ENCODE measurements at regions of chr10 and their contacts with region 1.

Region 1: DNA sequence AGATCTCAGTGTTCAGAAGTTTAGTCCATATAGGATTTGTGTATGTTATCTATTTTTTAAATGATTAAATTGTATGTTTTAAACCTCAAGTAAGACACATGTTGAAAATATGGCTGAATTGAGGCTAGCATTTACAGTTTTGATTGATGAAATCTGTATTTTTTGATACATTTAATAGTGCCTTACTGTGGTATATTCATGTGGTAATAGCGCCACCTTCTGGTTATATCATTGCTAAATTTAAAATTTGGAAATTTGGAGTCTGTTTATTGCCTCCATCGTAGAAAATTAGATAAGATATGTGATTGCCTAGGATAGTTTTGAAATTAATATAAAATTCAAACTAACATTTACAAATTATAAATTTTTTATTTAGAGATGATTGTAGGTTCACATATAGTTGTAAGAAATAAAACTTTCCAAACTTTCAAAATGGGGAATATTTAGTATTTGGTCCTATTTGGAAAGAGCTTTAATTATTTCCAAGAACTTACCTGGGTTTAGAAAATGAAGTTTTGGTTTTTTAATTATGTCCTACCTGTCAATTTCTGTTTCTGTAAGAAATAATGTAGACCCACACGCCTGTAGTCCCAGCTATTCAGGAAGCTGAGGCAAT is 19.1 kb upstream of the ARMS2 start:
- DNase-seq: peak in 1 of 35 experiments; percentile 77
- ATAC-seq: peak in 2 of 4 experiments; percentile 43 to 46
- H3K4me3 ChIP-seq: no peak overlapping the region
- H3K4me3 Mint-ChIP-seq: no peak overlapping the region
- H3K27ac ChIP-seq: no peak overlapping the region
- H3K27ac Mint-ChIP-seq: peak overlapping the region in 1 of 2 donors; percentile 37
- H3K4me1 ChIP-seq: no peaks in the 10 kb centered on the region
- H3K4me1 Mint-ChIP-seq: peaks cover 0 to 8% (median 0%) of the 10 kb centered on the region in 3 donors
- H3K27me3 ChIP-seq: no peaks in the 10 kb centered on the region
- H3K27me3 Mint-ChIP-seq: no peaks in the 10 kb centered on the region

Region 2: GRCh38 chr10:122298598-122299301 is 136.6 kb before region 1 on chr10:
- CTCF ChIA-PET with region 1: interaction called, 37 to 55 read pairs
- POLR2A ChIA-PET with region 1: no interaction called
- DNase-seq: peak; percentile 32 to 83 (median 58)
- ATAC-seq: peak; percentile 81 to 84 (median 83)
- H3K4me3 ChIP-seq: no peak overlapping the region
- H3K4me3 Mint-ChIP-seq: peak overlapping the region in 1 of 3 donors; percentile 31
- H3K27ac ChIP-seq: no peak overlapping the region
- H3K27ac Mint-ChIP-seq: no peak overlapping the region
- H3K4me1 ChIP-seq: peaks cover 0 to 27% of the 10 kb centered on the region in 2 experiments
- H3K4me1 Mint-ChIP-seq: peaks cover 12 to 17% (median 14%) of the 10 kb centered on the region in 3 donors
- H3K27me3 ChIP-seq: peaks cover 0 to 19% of the 10 kb centered on the region in 2 experiments
- H3K27me3 Mint-ChIP-seq: peaks cover 0 to 4% of the 10 kb centered on the region in 2 donors

Region 3: GRCh38 chr10:122342293-122343134 is 92.8 kb before region 1 on chr10:
- CTCF ChIA-PET with region 1: interaction called, 41 read pairs
- POLR2A ChIA-PET with region 1: no interaction called
- DNase-seq: peak; percentile 19 to 79 (median 54)
- ATAC-seq: peak; percentile 66 to 84 (median 72)
- H3K4me3 ChIP-seq: no peak overlapping the region
- H3K4me3 Mint-ChIP-seq: no peak overlapping the region
- H3K27ac ChIP-seq: no peak overlapping the region
- H3K27ac Mint-ChIP-seq: peak overlapping the region in 1 of 2 donors; percentile 57
- H3K4me1 ChIP-seq: peaks cover 0 to 2% of the 10 kb centered on the region in 2 experiments
- H3K4me1 Mint-ChIP-seq: peaks cover 6 to 9% (median 8%) of the 10 kb centered on the region in 3 donors
- H3K27me3 ChIP-seq: peaks cover 0 to 4% of the 10 kb centered on the region in 2 experiments
- H3K27me3 Mint-ChIP-seq: no peaks in the 10 kb centered on the region

Region 4: DNA sequence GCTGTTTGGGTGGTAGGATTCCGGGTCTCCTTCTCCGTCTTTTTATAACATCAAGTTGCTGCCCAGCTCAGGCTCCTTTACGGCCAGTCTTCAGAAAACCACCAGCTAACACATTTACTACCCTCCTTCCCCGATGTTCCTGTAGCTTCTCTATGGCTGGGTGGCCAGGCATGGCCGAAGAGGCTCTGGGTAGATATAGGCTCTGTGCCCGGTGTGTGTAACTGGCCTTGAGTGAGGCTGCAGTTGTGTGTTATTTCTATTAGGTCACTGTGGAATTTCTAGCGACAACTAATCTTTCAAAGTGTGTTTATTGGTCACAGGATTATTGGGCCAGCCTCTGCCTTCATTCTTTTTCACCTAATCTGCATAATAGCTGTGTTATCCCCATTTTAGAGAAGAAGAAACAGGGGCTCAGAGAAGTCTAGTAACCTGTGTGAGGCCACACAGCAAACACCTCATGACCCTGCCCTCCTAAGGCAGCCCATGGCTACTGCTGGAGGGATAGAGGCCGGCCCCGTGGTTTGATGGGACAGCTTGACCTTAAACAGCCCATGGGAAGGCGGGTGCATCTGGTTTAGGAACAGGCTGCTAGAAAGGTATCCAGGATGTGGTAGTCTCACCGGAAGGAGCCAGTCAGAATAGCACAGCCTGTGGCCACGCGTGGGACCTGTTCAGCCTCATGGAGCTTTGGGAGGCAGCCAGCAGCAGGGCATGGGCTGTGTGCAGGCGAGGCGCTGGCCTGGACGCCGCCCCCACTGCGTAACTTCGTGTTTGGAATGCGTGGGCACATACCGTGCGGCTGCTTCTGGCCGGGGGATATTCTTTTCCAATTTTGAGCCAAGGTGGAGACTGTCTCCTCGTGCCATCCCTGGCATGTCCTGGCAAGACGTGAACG is 55.7 kb after region 1 on chr10:
- CTCF ChIA-PET with region 1: no interaction called
- POLR2A ChIA-PET with region 1: no interaction called
- DNase-seq: peak in 9 of 35 experiments; percentile 6 to 46 (median 11)
- ATAC-seq: peak; percentile 65 to 83 (median 76)
- H3K4me3 ChIP-seq: no peak overlapping the region
- H3K4me3 Mint-ChIP-seq: no peak overlapping the region
- H3K27ac ChIP-seq: no peak overlapping the region
- H3K27ac Mint-ChIP-seq: no peak overlapping the region
- H3K4me1 ChIP-seq: peaks cover 0 to 21% of the 10 kb centered on the region in 2 experiments
- H3K4me1 Mint-ChIP-seq: peaks cover 11 to 32% (median 17%) of the 10 kb centered on the region in 3 donors
- H3K27me3 ChIP-seq: peaks cover 0 to 20% of the 10 kb centered on the region in 2 experiments
- H3K27me3 Mint-ChIP-seq: peaks cover 3 to 8% of the 10 kb centered on the region in 2 donors

Region 5: DNA sequence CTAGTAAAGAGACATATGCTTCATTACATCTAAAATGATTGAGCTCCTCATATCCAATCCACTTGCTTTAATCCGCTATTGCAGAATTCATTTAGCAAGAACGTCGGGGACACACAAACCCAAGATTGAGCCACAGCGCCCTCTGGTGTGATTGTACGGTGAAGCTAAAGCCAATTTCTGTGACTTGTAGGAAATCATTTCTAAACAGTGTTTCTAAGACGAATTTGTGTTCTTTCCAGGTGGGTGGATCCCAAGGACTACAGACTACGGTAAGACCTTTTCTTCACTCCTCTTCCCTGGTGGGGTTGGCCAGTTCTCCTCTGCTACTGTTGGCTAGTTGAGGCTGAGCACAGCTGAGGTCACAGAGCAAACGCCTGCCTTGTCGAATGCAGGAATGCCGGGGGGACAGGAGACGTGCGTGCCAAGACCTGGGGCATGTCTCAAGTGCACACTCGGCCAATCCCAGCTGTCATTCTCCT is 130.4 kb after region 1 on chr10:
- CTCF ChIA-PET with region 1: interaction called, 6 to 13 read pairs
- POLR2A ChIA-PET with region 1: no interaction called
- DNase-seq: peak; percentile 18 to 85 (median 67)
- ATAC-seq: peak in 1 of 4 experiments; percentile 44
- H3K4me3 ChIP-seq: no peak overlapping the region
- H3K4me3 Mint-ChIP-seq: no peak overlapping the region
- H3K27ac ChIP-seq: no peak overlapping the region
- H3K27ac Mint-ChIP-seq: no peak overlapping the region
- H3K4me1 ChIP-seq: peaks cover 0 to 6% of the 10 kb centered on the region in 2 experiments
- H3K4me1 Mint-ChIP-seq: peaks cover 12 to 18% (median 15%) of the 10 kb centered on the region in 3 donors
- H3K27me3 ChIP-seq: peaks cover 0 to 23% of the 10 kb centered on the region in 2 experiments
- H3K27me3 Mint-ChIP-seq: peaks cover 27 to 37% of the 10 kb centered on the region in 2 donors

Region 6: DNA sequence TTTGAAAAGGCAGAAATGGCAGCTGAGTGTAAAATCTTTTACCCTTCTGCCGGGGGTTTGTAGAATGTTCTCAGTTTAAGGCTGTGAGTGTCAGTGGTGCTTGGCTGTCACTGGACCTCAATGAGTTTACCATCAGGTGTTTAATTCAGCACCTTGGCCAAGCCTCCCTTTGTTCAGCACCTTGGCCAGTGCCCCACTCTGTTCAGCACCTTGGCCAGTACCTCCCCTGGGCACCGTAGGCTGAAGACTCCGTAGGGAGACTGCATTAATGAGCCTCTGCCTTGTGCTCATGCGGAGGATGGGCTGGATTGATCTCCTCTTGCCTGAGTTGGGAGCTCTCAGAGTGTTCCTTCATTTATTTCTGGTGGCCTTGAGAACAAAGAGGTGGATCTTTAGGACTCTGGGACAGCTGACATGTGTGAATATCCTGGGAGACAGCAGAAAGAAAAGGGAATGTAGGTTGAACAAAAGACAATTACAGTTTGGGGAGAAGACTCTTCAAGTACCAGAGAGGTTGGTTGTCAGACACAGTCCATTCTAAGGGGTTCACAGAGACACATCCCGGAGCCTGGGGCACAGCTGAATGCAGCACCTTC is 476.7 kb after region 1 on chr10:
- CTCF ChIA-PET with region 1: no interaction called
- POLR2A ChIA-PET with region 1: no interaction called
- DNase-seq: peak in 31 of 35 experiments; percentile 10 to 63 (median 43)
- ATAC-seq: peak in 3 of 4 experiments; percentile 44 to 69 (median 66)
- H3K4me3 ChIP-seq: no peak overlapping the region
- H3K4me3 Mint-ChIP-seq: no peak overlapping the region
- H3K27ac ChIP-seq: no peak overlapping the region
- H3K27ac Mint-ChIP-seq: no peak overlapping the region
- H3K4me1 ChIP-seq: no peaks in the 10 kb centered on the region
- H3K4me1 Mint-ChIP-seq: no peaks in the 10 kb centered on the region
- H3K27me3 ChIP-seq: peaks cover 0 to 22% of the 10 kb centered on the region in 2 experiments
- H3K27me3 Mint-ChIP-seq: peaks cover 11 to 17% of the 10 kb centered on the region in 2 donors

Region 7: DNA sequence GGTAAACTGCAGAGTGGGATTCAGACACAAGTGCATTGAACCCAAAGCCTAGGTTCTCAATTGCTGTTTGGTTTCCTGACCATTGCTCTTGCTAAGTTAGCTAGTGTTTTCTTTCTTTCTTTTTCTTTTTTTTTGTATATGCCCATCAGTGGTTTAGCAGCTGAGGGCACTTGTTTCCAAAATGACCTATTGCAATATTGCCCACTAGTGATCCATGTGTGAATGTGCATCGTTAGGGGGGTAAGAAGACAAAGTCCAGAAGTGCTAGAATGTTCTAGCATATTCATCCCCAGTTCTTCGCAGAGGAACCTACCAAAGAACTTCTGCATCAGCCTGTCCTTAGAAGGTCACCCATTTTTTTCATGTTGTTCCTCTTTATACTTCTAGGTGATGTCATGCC is 978.0 kb after region 1 on chr10:
- CTCF ChIA-PET with region 1: no interaction called
- POLR2A ChIA-PET with region 1: no interaction called
- DNase-seq: no peak
- ATAC-seq: no peak
- H3K4me3 ChIP-seq: no peak overlapping the region
- H3K4me3 Mint-ChIP-seq: no peak overlapping the region
- H3K27ac ChIP-seq: no peak overlapping the region
- H3K27ac Mint-ChIP-seq: no peak overlapping the region
- H3K4me1 ChIP-seq: no peaks in the 10 kb centered on the region
- H3K4me1 Mint-ChIP-seq: no peaks in the 10 kb centered on the region
- H3K27me3 ChIP-seq: no peaks in the 10 kb centered on the region
- H3K27me3 Mint-ChIP-seq: peaks cover 6 to 22% of the 10 kb centered on the region in 2 donors

Measured in T-cell (primary cell).